Mammary epithelial cell (primary cell): ENCODE measurements at regions of chr7 and their contacts with region 1.

Region 1: DNA sequence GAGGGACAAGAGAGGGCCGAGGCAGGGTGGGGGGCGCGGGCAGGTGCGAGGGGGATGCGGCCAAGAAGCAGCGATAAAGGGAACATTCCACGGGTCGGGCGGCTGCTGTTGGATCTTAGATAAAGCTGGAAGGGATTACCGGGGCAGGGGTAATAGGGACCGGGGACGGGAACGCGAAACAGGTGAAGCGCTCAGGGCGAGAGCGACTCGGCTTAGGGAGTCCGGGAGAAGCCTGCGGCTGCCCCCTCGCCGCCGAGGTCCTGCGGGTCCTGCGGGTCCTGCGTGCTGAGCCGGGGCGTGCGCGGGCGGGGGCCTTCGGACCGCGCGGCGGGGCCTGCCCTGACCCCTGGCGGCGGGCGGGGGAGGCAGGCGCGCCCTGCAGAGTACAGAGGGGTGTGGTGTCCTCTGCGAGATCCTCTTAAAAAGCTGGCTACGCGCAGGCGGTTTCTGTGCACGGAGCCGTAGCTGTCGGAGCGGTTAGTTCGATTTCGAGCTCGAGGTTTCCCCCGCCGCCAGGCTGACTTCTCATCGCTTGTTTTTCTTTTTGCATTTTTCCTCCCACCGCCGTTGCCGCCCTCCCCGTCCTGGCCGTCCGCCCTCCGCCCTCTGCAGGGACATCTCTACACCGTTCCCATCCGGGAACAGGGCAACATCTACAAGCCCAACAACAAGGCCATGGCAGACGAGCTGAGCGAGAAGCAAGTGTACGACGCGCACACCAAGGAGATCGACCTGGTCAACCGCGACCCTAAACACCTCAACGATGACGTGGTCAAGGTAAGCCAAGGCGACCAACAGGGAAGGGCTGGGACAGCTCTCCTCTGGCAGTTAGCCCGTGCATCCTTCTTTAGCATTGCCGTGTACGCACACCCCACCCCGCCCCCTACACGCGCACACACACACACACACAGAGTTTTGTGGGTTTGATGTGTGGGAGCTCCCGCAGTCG is 1.4 kb downstream of the CAV1 start:
- DNase-seq: peak; percentile 77
- H3K4me3 ChIP-seq: peak overlapping the region; percentile 72 to 78 (median 76)
- H3K27ac ChIP-seq: peak overlapping the region; percentile 96
- H3K4me1 ChIP-seq: peaks cover 62% of the 10 kb centered on the region
- H3K27me3 ChIP-seq: no peaks in the 10 kb centered on the region
- CTCF ChIP-seq: peak; percentile 47 to 62

Region 2: GRCh38 chr7:116138202-116138801 is 387.9 kb before region 1 on chr7:
- CTCF ChIA-PET with region 1: no interaction called
- dilution Hi-C with region 1: no loop called
- in situ Hi-C with region 1: no loop called
- intact Hi-C with region 1: loop called (anchors 5 kb)
- DNase-seq: peak; percentile 69
- H3K4me3 ChIP-seq: no peak overlapping the region
- H3K27ac ChIP-seq: peak overlapping the region; percentile 61
- H3K4me1 ChIP-seq: peaks cover 21% of the 10 kb centered on the region
- H3K27me3 ChIP-seq: no peaks in the 10 kb centered on the region
- CTCF ChIP-seq: peak; percentile 82 to 85

Region 3: GRCh38 chr7:116316833-116317612 is 209.2 kb before region 1 on chr7:
- CTCF ChIA-PET with region 1: no interaction called
- dilution Hi-C with region 1: no loop called
- in situ Hi-C with region 1: no loop called
- intact Hi-C with region 1: loop called (anchors 1 kb)
- DNase-seq: peak; percentile 100
- H3K4me3 ChIP-seq: peak overlapping the region in 2 of 3 experiments; percentile 4 to 10
- H3K27ac ChIP-seq: peak overlapping the region; percentile 94
- H3K4me1 ChIP-seq: peaks cover 24% of the 10 kb centered on the region
- H3K27me3 ChIP-seq: no peaks in the 10 kb centered on the region
- CTCF ChIP-seq: no peak

Region 4: DNA sequence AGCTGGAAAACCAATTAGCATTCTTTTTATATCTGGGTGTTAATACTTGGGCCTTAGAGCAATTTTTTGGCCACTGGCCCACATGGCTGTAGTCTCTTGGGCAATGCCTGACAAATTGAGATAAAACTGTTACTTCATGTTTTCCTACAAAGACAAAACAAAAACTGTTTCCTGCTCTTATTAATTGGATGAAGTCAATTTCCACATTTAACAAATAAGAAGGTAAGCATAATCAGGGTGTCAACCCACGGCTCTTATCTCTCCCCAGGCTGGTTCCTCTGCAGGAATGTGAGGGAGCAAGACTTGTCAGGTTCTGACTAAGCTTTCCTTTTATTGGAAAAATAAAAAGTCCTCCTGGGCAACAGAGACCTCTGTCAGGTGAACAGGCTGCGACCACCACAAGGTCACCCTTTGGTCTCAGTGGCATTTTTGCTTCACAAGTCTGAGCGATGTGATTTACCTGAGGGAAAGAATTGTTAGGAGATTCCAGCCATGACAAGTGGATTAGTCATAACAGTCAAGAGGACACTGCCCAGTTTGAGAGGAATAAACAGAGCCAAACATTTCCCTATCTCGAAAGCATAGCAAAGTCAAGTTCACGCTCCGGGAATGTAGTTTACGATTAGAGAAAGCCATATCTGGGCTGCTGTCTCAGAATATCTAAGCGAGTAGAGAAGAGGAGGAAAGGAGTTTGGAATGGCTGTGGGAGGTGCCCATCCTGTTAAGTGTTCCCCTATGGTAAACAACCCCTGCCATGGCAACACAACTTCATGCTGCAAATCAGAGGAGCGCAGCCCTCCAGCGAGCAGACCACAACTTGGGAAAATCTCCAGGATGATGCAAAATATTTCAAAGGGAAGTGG is 171.4 kb before region 1 on chr7:
- CTCF ChIA-PET with region 1: no interaction called
- dilution Hi-C with region 1: no loop called
- in situ Hi-C with region 1: no loop called
- intact Hi-C with region 1: loop called (anchors 1 kb)
- DNase-seq: peak; percentile 98
- H3K4me3 ChIP-seq: peak overlapping the region; percentile 26 to 42 (median 31)
- H3K27ac ChIP-seq: peak overlapping the region; percentile 100
- H3K4me1 ChIP-seq: peaks cover 53% of the 10 kb centered on the region
- H3K27me3 ChIP-seq: no peaks in the 10 kb centered on the region
- CTCF ChIP-seq: no peak

Region 5: DNA sequence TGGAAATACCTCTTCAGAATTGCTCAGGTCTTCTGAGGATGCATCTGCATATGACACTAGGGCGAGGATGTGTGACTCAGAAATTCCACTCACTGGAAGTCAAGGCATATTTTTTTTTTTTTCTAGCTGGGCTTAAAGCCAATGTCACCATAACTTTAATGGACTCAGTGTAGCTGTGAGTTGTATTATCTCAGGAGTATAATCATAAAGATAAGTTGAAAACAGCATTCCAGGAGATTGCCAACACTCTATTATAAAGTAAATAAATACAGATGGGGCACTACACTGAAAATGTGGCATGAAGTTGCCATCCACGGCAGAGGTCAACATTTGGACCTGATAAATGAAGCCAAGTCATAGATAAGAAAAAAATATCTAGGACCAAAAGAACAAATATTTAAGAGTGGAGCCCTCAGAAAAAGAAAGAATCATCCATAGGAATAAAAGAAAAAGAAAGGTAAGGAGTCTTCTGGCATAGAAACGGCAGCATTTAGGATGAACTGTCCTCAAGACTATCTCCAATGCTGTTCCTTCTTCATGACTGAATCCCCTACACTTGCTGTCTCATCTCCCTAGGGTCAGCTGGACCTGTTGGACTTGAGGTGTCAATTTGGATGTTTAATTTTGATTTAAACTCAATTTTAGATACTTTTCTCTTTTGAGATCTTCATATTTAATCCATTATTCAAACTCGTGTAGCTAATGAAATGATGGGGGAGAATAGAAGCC is 99.6 kb before region 1 on chr7:
- CTCF ChIA-PET with region 1: no interaction called
- dilution Hi-C with region 1: no loop called
- in situ Hi-C with region 1: no loop called
- intact Hi-C with region 1: no loop called
- DNase-seq: peak; percentile 76
- H3K4me3 ChIP-seq: no peak overlapping the region
- H3K27ac ChIP-seq: peak overlapping the region; percentile 81
- H3K4me1 ChIP-seq: peaks cover 41% of the 10 kb centered on the region
- H3K27me3 ChIP-seq: no peaks in the 10 kb centered on the region
- CTCF ChIP-seq: no peak

Region 6: DNA sequence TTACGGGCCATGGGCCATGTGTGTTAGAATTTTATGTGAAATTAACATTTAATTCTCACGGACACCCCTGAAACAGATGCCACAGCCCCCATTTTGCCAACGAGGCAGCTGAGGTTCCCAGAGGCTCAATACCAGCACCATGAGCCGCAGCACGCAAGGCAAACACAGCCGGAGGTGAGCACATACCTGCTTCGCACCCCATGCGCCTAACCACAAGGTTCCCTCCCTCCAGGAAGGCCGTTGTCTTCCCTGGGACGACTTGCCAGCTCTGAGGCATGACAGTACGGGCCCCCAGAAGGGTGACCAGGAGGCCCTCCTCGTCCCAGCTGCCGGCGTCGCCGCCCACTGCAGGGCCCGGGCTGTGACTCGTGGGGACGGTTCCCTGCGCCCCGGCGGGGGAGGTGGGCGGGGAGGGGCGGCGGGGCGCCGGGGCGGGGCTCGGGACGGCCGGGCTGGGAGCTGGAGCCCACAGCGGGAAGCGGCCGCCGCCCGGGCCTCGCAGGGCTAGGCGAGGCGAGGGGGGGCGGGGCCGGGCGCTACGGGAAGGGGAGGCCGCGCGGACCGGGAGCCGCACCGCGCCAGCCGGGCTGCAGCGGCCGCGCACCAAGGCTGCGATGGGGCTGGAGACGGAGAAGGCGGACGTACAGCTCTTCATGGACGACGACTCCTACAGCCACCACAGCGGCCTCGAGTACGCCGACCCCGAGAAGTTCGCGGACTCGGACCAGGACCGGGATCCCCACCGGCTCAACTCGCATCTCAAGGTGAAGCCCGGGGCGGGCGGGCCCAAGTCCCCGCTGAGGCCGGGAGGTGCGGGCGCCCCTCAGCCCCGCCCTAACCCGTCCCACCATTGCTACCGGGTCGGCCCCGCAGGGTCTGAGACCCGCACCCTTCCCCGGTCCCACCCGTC is 26.8 kb before region 1 on chr7 and contains the start of gene CAV2:
- CTCF ChIA-PET with region 1: interaction called, 3 read pairs
- dilution Hi-C with region 1: no loop called
- in situ Hi-C with region 1: no loop called
- intact Hi-C with region 1: loop called (anchors 1 kb)
- DNase-seq: peak; percentile 96
- H3K4me3 ChIP-seq: peak within 1 kb of the TSS; percentile 59 to 98 (median 80)
- H3K27ac ChIP-seq: peak within 1 kb of the TSS; percentile 99
- H3K4me1 ChIP-seq: peaks cover 34% of the 10 kb centered on the region
- H3K27me3 ChIP-seq: no peaks in the 10 kb centered on the region
- CTCF ChIP-seq: no peak
- total RNA-seq, gene CAV2: 253 to 385 TPM

Region 7: GRCh38 chr7:116588641-116589594 is 62.7 kb after region 1 on chr7:
- CTCF ChIA-PET with region 1: no interaction called
- dilution Hi-C with region 1: no loop called
- in situ Hi-C with region 1: no loop called
- intact Hi-C with region 1: loop called (anchors 1 kb)
- DNase-seq: peak; percentile 44
- H3K4me3 ChIP-seq: no peak overlapping the region
- H3K27ac ChIP-seq: peak overlapping the region; percentile 32
- H3K4me1 ChIP-seq: peaks cover 16% of the 10 kb centered on the region
- H3K27me3 ChIP-seq: no peaks in the 10 kb centered on the region
- CTCF ChIP-seq: peak; percentile 45 to 57

Region 8: GRCh38 chr7:116687801-116688201 is 161.6 kb after region 1 on chr7:
- CTCF ChIA-PET with region 1: no interaction called
- dilution Hi-C with region 1: no loop called
- in situ Hi-C with region 1: no loop called
- intact Hi-C with region 1: no loop called
- DNase-seq: peak; percentile 78
- H3K4me3 ChIP-seq: no peak overlapping the region
- H3K27ac ChIP-seq: peak overlapping the region; percentile 64
- H3K4me1 ChIP-seq: peaks cover 56% of the 10 kb centered on the region
- H3K27me3 ChIP-seq: no peaks in the 10 kb centered on the region
- CTCF ChIP-seq: no peak